ENCODE measurements at regions of chr2 and their contacts with region 1.

Region 1: DNA sequence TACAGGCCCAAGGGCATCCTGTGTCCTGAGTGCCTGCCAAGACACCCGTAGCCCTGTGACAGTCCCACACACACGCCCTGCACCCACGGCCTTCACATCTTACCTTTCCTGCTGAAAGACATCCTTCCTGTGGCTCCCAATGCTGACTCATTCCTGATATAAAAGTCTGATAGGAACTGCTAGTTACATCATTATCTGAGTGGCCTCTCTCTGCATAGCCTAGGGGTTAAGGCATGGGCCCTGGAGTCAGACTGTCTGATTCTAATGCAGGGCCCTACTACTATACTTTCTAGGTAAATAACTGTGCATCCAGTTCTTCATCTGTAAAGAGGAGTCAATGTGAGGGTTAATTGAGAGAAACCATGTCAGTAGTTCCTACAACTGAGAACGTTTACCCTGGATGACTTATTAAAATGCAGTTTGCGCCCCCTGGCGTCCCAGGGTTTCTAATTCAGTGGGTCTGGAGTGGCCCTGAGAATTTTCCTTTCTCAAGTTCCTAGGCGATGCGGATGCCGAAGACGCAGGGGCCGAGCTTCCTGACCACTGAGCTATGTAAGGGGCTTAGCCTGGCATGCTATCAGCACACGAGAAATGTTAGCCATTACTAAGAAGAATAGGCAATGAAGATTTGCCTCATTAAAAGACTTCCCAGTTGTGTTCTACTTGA is 6.0 kb upstream of the GPR45 start:
- DNase-seq: peak; percentile 56 to 92
- ATAC-seq: peak; percentile 86

Region 2: DNA sequence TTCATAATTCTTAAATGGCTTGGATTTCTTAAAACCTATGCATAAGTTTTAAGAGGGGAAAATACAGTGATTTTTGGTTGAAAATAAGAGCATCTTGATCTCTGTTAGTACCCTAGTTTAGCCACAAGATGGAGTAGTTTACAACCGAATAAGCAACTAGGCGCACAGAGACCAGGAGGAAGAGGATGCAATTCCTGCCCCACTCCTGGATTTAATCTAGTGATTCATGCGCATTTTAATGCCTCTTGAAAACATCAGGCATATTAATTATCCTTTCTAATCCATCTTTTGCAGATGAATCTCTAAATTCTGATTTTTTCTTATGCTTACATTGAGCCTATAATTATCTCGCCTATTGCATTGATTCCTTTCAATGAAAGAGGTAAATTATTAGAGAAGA is 121.0 kb before region 1 on chr2:
- intact Hi-C with region 1: loop called (anchors 2 to 10 kb)
- DNase-seq: no peak
- ATAC-seq: peak; percentile 65